Activated B cell treated with CpG ODN at 0.5 μM for 24 hours (primary cell): ENCODE measurements at regions of chr6 and their contacts with region 1.

Region 1: GRCh38 chr6:135145063-135145800 is 35.9 kb upstream of the MYB start:
- DNase-seq: no peak
- ATAC-seq: peak; percentile 62
- H3K4me3 Mint-ChIP-seq: peak overlapping the region; percentile 56
- H3K27ac Mint-ChIP-seq: peak overlapping the region; percentile 62
- H3K4me1 Mint-ChIP-seq: peaks cover 46% of the 10 kb centered on the region
- H3K27me3 Mint-ChIP-seq: no peaks in the 10 kb centered on the region
- CTCF ChIP-seq: no peak

Region 2: DNA sequence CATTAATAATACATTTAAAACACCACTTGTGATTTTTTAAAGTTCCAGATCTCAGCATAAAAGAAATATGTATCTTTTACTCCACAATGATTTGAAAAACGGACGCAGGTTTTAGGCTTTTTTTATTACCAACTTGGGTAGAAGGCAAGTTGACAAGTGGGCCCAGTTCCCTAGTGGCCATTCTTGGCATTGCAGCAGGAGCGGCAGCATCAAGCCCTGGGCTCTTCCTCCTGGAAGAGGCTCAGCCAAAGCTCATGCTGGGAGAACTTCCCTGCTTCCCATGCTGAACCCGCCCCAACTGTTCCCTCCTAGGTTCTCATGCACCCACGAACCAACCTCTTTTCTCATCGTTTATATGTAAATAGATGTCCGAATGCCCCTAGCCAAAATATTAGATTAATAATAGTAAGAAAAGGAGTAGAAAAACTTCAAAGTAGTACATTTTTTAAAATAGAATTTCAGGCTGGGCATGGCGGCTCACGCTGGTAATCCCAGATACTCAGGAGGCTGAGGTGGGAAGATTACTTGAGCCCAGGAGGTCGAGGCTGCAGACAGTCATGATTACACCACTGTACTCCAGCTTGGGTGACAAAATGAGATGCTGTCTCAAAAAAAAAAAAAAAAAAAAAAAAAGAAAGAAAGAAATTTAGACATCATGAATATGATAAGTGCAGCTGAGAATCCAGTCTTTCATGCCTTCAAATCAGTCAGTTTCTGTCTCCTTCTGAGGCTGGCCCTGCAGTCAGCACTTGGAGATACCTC is 17.6 kb after region 1 on chr6:
- CTCF ChIA-PET with region 1: interaction called, 7 read pairs
- POLR2A ChIA-PET with region 1: no interaction called
- intact Hi-C with region 1: loop called (anchors 1 kb)
- DNase-seq: no peak
- ATAC-seq: peak; percentile 29
- H3K4me3 Mint-ChIP-seq: peak overlapping the region; percentile 25
- H3K27ac Mint-ChIP-seq: peak overlapping the region; percentile 79
- H3K4me1 Mint-ChIP-seq: peaks cover 20% of the 10 kb centered on the region
- H3K27me3 Mint-ChIP-seq: no peaks in the 10 kb centered on the region
- CTCF ChIP-seq: peak; percentile 40

Region 3: DNA sequence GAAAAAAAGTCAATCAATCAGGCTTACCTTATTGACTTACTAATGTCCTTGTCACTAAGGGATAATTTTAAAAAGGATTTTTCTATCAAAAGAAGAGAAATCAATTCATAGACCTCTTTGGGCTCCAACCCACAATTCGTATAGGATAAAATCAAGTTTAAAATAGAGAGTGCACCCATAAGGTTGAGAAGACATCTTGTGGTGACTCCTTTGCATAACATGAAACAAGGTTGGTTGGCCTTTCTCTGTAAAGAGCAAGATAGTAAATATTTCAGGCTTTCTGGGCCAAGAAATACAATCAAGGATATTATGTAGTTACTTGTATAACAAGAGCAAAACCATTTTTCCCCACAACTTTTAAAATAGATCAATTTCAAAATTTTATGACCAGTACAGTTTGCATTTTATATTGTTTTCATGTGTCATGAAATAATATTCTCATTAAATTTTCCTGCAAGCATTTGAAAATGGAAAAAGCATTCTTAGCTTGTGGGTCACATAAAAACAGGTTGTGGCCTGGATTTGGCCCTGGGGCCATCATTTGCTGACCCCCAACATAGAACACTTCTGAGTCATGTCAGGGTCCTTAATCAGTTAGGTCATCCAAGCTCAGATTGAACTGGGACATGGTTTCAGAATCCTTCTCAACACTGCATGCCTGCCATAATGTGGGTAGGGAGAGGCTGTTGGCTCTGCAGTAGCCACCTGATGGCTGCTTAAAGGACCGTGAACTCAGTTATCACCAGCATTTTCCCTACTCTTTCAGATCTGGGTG is 112.6 kb after region 1 on chr6:
- CTCF ChIA-PET with region 1: interaction called, 8 read pairs
- POLR2A ChIA-PET with region 1: no interaction called
- intact Hi-C with region 1: loop called (anchors 1 kb)
- DNase-seq: no peak
- ATAC-seq: no peak
- H3K4me3 Mint-ChIP-seq: no peak overlapping the region
- H3K27ac Mint-ChIP-seq: no peak overlapping the region
- H3K4me1 Mint-ChIP-seq: no peaks in the 10 kb centered on the region
- H3K27me3 Mint-ChIP-seq: no peaks in the 10 kb centered on the region
- CTCF ChIP-seq: no peak

Region 4: DNA sequence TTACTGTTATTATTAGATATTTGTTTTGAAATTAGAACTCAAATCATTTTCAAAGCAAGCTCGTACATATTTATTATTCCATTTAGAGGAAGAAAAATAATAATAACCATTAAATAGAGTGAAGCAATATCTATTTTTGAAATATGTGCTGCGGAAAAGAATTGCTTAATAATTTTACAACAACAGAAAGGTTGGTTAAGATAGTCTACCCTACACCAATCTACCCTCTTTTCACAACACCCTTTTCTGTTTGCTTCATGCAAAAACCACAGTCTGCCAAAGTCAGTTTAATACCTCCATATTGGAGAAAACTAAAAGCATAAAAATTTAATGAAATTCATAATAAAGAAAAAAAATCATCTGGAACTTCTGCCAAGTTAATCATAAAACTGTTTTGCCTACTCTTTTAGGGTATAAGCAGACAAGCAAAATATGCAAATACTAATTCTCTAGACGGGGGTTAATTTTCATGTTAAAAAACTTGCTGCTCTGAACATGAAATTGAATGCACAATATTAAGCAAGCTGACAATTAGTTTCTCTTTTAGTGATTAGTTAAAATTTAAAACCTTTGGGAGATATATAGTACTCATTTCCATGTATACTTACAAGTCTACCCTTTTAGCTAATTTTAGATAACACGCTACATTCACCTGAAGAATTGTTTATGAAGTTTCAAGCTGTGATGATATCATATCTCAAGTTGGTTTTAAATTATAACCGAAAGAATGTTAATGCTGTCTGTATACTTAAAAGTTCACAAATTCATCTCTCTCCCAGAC is 252.1 kb after region 1 on chr6:
- CTCF ChIA-PET with region 1: no interaction called
- POLR2A ChIA-PET with region 1: no interaction called
- intact Hi-C with region 1: no loop called
- DNase-seq: no peak
- ATAC-seq: no peak
- H3K4me3 Mint-ChIP-seq: no peak overlapping the region
- H3K27ac Mint-ChIP-seq: no peak overlapping the region
- H3K4me1 Mint-ChIP-seq: no peaks in the 10 kb centered on the region
- H3K27me3 Mint-ChIP-seq: no peaks in the 10 kb centered on the region
- CTCF ChIP-seq: no peak

Region 5: DNA sequence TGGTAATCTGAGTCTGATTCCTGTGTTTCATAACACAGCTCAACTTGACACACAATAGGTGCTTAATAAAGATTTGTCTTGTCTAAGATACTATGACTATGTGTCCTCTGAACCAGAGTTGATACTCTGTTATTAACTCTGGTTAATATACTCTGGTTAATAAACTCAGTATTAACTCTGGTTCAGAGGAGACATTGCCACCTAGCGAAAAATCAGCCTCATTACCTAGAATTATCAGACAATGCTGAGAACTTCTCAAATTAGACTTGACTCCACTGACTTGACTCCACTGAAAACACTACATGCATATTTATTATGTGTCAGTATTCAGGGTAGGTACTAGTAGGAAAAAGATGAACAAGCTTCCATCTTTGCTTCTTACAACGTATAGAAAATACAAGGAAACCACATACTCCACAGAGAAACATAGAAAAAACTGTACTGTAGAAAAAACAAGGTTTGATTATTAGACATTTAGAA is 278.5 kb after region 1 on chr6:
- CTCF ChIA-PET with region 1: interaction called, 28 read pairs
- POLR2A ChIA-PET with region 1: no interaction called
- intact Hi-C with region 1: loop called (anchors 1 kb)
- DNase-seq: no peak
- ATAC-seq: peak; percentile 60
- H3K4me3 Mint-ChIP-seq: no peak overlapping the region
- H3K27ac Mint-ChIP-seq: no peak overlapping the region
- H3K4me1 Mint-ChIP-seq: no peaks in the 10 kb centered on the region
- H3K27me3 Mint-ChIP-seq: no peaks in the 10 kb centered on the region
- CTCF ChIP-seq: no peak

Region 6: GRCh38 chr6:135438907-135439535 is 293.8 kb after region 1 on chr6:
- CTCF ChIA-PET with region 1: no interaction called
- POLR2A ChIA-PET with region 1: no interaction called
- intact Hi-C with region 1: loop called (anchors 1 kb)
- DNase-seq: no peak
- ATAC-seq: peak; percentile 25
- H3K4me3 Mint-ChIP-seq: no peak overlapping the region
- H3K27ac Mint-ChIP-seq: no peak overlapping the region
- H3K4me1 Mint-ChIP-seq: peaks cover 22% of the 10 kb centered on the region
- H3K27me3 Mint-ChIP-seq: no peaks in the 10 kb centered on the region
- CTCF ChIP-seq: no peak